Left ventricle myocardium superior (tissue), 1 donor: ENCODE measurements at regions of chr12 and their contacts with region 1.

Region 1: GRCh38 chr12:5442251-5443006 is 10.5 kb downstream of the NTF3 start:
- DNase-seq: no peak
- ATAC-seq: peak; percentile 92

Region 2: DNA sequence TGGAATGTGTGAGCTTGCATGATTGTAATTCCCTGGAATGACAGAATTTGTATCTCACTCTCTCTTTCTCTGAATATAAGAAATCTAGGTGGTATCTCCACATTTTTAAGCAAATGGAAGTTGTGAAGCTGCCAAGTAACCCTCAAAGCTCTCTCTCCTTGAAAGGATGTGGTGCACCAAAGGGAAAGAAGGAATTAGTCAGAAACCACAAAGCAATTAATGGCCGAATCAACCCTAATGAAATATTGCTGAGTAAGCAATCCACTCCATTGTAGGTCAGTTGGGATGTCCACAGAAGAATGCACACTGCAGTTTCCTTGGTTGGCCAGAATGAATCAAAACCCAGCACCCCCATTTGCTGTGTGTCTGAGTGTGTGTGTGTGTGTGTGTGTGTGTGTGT is 245.3 kb before region 1 on chr12:
- intact Hi-C with region 1: loop called (anchors 10 kb)
- DNase-seq: no peak
- ATAC-seq: no peak

Region 3: GRCh38 chr12:5511644-5512600 is 69.5 kb after region 1 on chr12:
- intact Hi-C with region 1: loop called (anchors 10 kb)
- DNase-seq: peak; percentile 63
- ATAC-seq: peak; percentile 46